ENCODE measurements at regions of chr9 and their contacts with region 1.

Region 1: GRCh38 chr9:131214286-131214856 is 61.9 kb downstream of the FAM78A start:
- DNase-seq: no peak
- ATAC-seq: peak; percentile 13
- H3K4me3 ChIP-seq: no peak overlapping the region
- H3K27ac ChIP-seq: no peak overlapping the region
- H3K4me1 ChIP-seq: peaks cover 0 to 16% of the 10 kb centered on the region in 2 experiments; a peak in 3 of 5 replicates
- H3K27me3 ChIP-seq: no peaks in the 10 kb centered on the region
- CTCF ChIP-seq: no peak
- EP300 ChIP-seq: no peak
- POLR2A ChIP-seq: no peak
- RAD21 ChIP-seq: no peak

Region 2: DNA sequence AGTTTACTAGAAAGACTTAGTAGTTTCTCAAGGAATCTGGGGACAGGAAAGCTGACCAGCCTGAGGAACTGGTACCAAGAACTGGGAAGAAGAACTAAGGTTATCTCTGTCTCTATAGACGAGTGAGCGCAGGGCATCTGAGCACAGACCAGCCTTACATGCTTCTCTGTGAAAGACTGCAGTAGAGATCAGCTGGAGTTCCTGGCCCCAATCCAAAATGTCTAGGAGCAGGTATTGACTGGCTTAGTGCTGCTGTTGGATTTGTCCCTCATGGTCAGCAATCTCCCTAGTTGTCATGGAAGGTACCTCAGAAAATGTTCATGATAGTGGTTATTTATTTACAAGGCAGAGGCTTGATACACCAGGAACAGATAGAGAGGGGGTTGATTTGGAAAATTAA is 75.7 kb before region 1 on chr9:
- CTCF ChIA-PET with region 1: no interaction called
- POLR2A ChIA-PET with region 1: no interaction called
- in situ Hi-C with region 1: no loop called
- intact Hi-C with region 1: no loop called
- DNase-seq: peak in 3 of 4 experiments; percentile 63 to 80 (median 78)
- ATAC-seq: peak; percentile 7
- H3K4me3 ChIP-seq: no peak overlapping the region
- H3K27ac ChIP-seq: no peak overlapping the region
- H3K4me1 ChIP-seq: peaks cover 0 to 6% of the 10 kb centered on the region in 2 experiments; a peak in 2 of 5 replicates
- H3K27me3 ChIP-seq: no peaks in the 10 kb centered on the region
- CTCF ChIP-seq: no peak
- EP300 ChIP-seq: no peak
- POLR2A ChIP-seq: no peak
- RAD21 ChIP-seq: no peak

Region 3: DNA sequence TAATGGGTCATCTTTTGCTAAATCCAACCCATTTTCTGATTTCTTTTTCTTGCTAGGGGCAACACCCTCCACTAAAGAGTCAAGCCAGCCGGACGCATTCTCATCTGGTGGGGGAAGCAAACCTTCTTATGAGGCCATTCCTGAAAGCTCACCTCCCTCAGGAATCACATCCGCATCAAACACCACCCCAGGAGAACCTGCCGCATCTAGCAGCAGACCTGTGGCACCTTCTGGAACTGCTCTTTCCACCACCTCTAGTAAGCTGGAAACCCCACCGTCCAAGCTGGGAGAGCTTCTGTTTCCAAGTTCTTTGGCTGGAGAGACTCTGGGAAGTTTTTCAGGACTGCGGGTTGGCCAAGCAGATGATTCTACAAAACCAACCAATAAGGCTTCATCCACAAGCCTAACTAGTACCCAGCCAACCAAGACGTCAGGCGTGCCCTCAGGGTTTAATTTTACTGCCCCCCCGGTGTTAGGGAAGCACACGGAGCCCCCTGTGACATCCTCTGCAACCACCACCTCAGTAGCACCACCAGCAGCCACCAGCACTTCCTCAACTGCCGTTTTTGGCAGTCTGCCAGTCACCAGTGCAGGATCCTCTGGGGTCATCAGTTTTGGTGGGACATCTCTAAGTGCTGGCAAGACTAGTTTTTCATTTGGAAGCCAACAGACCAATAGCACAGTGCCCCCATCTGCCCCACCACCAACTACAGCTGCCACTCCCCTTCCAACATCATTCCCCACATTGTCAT is 17.0 kb before region 1 on chr9:
- CTCF ChIA-PET with region 1: no interaction called
- POLR2A ChIA-PET with region 1: interaction called, 82 read pairs
- in situ Hi-C with region 1: no loop called
- intact Hi-C with region 1: no loop called
- DNase-seq: peak in 3 of 4 experiments; percentile 58 to 73 (median 70)
- ATAC-seq: peak; percentile 21
- H3K4me3 ChIP-seq: no peak overlapping the region
- H3K27ac ChIP-seq: no peak overlapping the region
- H3K4me1 ChIP-seq: peaks cover 0 to 4% of the 10 kb centered on the region in 2 experiments; a peak in 1 of 5 replicates
- H3K27me3 ChIP-seq: no peaks in the 10 kb centered on the region
- CTCF ChIP-seq: no peak
- EP300 ChIP-seq: no peak
- POLR2A ChIP-seq: no peak
- RAD21 ChIP-seq: no peak

Region 4: DNA sequence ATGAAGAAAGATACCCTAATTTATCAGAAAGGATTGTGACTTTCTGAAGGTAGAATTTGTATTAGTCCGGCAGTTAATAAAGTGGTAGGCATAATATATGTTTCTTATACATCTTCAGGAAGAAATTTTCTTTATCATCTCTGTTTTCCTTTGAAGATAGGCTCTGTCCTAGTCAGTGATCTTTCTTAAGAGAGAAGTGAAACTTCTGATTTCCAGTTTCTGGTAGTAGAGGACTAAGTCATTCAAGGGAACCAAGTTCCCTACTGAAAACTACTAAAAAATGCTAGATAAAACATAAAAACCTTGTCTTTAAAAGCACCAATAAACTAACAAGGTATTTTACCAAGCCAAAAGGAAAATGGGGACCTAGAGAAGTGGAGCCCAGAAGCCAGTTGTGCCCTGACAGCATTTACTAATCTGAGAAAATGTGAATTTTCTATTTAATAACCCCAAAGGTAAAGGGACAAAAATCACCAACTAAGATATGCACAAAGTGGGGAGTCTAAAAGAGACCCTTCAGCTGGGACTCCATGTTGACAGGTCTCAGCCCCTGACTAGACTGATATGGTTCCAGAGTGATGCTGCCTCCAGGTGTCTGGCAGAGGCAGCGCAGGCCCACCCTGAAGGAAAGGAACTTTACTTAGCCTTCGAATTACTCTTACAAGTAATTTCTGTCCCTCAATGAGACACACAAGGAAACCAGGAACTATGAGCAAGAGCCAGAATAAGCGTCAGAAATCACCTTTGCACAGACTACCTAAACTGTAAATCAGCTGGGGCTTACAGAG is 10.7 kb before region 1 on chr9:
- CTCF ChIA-PET with region 1: no interaction called
- POLR2A ChIA-PET with region 1: interaction called, 96 read pairs
- in situ Hi-C with region 1: no loop called
- intact Hi-C with region 1: no loop called
- DNase-seq: peak; percentile 66 to 83 (median 76)
- ATAC-seq: peak; percentile 86
- H3K4me3 ChIP-seq: no peak overlapping the region
- H3K27ac ChIP-seq: no peak overlapping the region
- H3K4me1 ChIP-seq: no peaks in the 10 kb centered on the region
- H3K27me3 ChIP-seq: no peaks in the 10 kb centered on the region
- CTCF ChIP-seq: no peak
- EP300 ChIP-seq: no peak
- POLR2A ChIP-seq: no peak
- RAD21 ChIP-seq: no peak

Region 5: GRCh38 chr9:131227112-131227958 is 13.0 kb after region 1 on chr9:
- CTCF ChIA-PET with region 1: interaction called, 3 read pairs
- POLR2A ChIA-PET with region 1: interaction called, 156 read pairs
- in situ Hi-C with region 1: no loop called
- intact Hi-C with region 1: no loop called
- DNase-seq: no peak
- ATAC-seq: no peak
- H3K4me3 ChIP-seq: no peak overlapping the region
- H3K27ac ChIP-seq: no peak overlapping the region
- H3K4me1 ChIP-seq: peaks cover 0 to 3% of the 10 kb centered on the region in 2 experiments; a peak in 2 of 5 replicates
- H3K27me3 ChIP-seq: no peaks in the 10 kb centered on the region
- CTCF ChIP-seq: no peak
- EP300 ChIP-seq: no peak
- POLR2A ChIP-seq: no peak
- RAD21 ChIP-seq: no peak

Region 6: DNA sequence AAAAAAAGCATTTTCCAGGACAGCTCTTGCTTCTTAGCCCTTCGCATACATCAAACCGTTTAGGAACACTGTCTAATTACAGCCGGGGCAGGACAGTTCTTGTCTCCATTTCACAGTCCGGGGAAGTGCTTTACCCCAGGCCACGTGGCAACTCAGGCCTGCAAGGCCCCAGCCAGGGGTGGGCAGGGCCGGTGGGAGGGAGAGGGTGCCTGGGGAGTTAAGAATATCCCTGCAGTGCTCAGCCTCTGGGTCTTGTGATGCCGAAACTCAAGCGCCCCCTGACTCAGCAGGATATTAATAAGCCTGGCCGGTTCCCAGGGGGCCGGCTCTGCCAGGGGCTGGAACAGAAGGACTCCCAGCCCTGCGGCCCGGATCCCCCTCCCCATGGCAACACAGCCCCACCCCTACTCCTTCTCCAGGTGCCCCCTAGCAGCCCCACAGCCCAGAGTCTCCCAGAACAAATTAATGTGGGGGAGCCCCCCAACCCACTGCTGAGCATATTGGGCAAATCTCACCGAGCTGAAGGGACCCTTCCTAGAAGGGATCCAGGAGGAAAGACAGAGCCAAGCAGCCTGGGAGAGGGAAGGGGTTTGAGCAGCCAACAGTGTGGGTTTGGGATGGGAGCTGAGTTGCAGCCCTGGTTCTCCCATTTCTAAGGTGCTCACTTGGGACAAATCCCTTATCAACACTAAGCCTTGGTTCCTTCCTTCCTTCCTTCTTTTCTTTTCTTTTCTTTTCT is 120.4 kb after region 1 on chr9:
- CTCF ChIA-PET with region 1: no interaction called
- POLR2A ChIA-PET with region 1: interaction called, 4 read pairs
- in situ Hi-C with region 1: loop called (anchors 10 kb)
- intact Hi-C with region 1: no loop called
- DNase-seq: peak in 3 of 4 experiments; percentile 24 to 26 (median 25)
- ATAC-seq: 0 out of 3 replicates have a peak, but pooled peaks have one; percentile 3
- H3K4me3 ChIP-seq: no peak overlapping the region
- H3K27ac ChIP-seq: no peak overlapping the region
- H3K4me1 ChIP-seq: peaks cover 21 to 45% of the 10 kb centered on the region in 2 experiments; a peak in 4 of 5 replicates
- H3K27me3 ChIP-seq: no peaks in the 10 kb centered on the region
- CTCF ChIP-seq: no peak
- EP300 ChIP-seq: no peak
- POLR2A ChIP-seq: no peak
- RAD21 ChIP-seq: no peak